ENCODE measurements at regions of chr11 and their contacts with region 1.

Region 1: DNA sequence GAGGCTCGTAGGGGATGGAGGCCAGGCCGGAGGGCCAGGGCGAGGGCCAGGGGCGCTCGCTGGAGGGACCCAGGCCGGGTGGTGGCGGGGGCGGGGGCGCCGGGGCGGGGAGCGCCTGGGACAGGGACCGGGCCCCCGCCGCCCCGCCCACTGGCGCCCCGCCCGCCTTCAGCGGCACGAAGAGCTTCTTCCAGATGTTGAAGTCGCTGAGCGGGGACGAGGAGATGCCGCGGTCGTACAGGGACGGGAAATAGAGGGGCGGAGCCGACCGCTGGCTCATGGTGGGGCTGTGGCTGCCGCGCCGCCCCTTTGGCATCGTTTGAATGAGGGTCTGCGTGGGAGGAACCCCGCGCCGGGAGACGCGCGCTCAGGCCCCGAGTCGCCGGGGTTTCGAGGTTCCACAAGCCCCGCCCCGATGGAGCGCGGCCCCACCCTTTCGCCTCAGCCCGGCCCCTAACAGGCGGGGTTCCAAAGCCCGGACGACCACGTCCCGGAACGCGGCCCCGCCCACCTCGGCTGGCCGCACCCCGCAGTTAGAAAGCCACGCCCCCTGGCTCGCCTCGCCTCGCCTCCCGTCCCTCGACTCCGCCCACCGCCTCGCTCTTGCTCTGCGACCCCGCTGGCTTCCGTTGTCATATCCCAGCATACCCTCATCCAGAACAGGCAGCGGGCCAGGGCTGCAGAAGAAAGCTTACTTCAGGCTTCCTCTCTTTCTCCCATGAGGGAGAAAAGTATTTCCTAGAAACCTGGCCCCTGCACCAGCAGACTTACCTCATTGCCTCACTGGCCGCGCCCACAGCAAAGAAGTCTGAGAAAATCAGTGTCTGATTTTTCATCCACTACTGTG is at the start of gene C11orf91:
- DNase-seq: peak; percentile 94
- H3K4me3 Mint-ChIP-seq: peak within 1 kb of the TSS; percentile 85
- H3K27ac Mint-ChIP-seq: peak within 1 kb of the TSS; percentile 61
- H3K4me1 Mint-ChIP-seq: peaks cover 7% of the 10 kb centered on the region
- H3K27me3 Mint-ChIP-seq: peaks cover 8% of the 10 kb centered on the region
- total RNA-seq, gene C11orf91: not detected

Region 2: GRCh38 chr11:33716236-33716635 is 15.6 kb after region 1 on chr11:
- CTCF ChIA-PET with region 1: interaction called, 10 read pairs
- intact Hi-C with region 1: no loop called
- DNase-seq: peak; percentile 39
- H3K4me3 Mint-ChIP-seq: no peak overlapping the region
- H3K27ac Mint-ChIP-seq: no peak overlapping the region
- H3K4me1 Mint-ChIP-seq: peaks cover under 1% of the 10 kb centered on the region
- H3K27me3 Mint-ChIP-seq: no peaks in the 10 kb centered on the region

Region 3: DNA sequence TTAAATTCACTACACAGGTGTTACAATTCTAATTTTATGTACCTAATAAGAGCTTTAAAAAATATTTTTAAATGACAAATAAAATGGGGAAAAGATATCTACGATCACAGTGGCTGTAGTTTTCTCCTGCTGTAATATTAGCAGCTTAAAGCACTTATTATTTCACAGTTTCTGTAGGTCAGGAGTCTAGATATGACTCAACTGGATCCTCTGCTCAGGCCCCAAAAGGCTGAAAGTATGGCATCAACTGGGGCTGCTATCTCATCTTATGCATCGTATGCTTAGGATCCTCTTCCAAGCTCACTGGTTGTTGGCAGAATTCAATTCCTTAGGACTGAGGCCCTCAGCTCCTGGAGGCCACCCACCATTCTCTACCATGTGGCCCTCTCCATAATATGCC is 60.8 kb after region 1 on chr11:
- CTCF ChIA-PET with region 1: no interaction called
- intact Hi-C with region 1: no loop called
- DNase-seq: no peak
- H3K4me3 Mint-ChIP-seq: no peak overlapping the region
- H3K27ac Mint-ChIP-seq: no peak overlapping the region
- H3K4me1 Mint-ChIP-seq: no peaks in the 10 kb centered on the region
- H3K27me3 Mint-ChIP-seq: no peaks in the 10 kb centered on the region

Region 4: GRCh38 chr11:33773987-33774735 is 73.5 kb after region 1 on chr11 and contains the start of gene FBXO3:
- CTCF ChIA-PET with region 1: no interaction called
- intact Hi-C with region 1: loop called (anchors 1 kb)
- DNase-seq: peak; percentile 82
- H3K4me3 Mint-ChIP-seq: peak within 1 kb of the TSS; percentile 90
- H3K27ac Mint-ChIP-seq: peak within 1 kb of the TSS; percentile 85
- H3K4me1 Mint-ChIP-seq: peaks cover 40% of the 10 kb centered on the region
- H3K27me3 Mint-ChIP-seq: peaks cover 12% of the 10 kb centered on the region
- total RNA-seq, gene FBXO3: 12.2 to 12.9 TPM

Measured in activated naive CD4-positive, alpha-beta T cell treated with anti-CD3 and anti-CD28 coated beads for 36 hours (primary cell).